Activated B cell treated with CpG ODN at 0.5 μM for 24 hours (primary cell): ENCODE measurements at regions of chr2 and their contacts with region 1.

Region 1: DNA sequence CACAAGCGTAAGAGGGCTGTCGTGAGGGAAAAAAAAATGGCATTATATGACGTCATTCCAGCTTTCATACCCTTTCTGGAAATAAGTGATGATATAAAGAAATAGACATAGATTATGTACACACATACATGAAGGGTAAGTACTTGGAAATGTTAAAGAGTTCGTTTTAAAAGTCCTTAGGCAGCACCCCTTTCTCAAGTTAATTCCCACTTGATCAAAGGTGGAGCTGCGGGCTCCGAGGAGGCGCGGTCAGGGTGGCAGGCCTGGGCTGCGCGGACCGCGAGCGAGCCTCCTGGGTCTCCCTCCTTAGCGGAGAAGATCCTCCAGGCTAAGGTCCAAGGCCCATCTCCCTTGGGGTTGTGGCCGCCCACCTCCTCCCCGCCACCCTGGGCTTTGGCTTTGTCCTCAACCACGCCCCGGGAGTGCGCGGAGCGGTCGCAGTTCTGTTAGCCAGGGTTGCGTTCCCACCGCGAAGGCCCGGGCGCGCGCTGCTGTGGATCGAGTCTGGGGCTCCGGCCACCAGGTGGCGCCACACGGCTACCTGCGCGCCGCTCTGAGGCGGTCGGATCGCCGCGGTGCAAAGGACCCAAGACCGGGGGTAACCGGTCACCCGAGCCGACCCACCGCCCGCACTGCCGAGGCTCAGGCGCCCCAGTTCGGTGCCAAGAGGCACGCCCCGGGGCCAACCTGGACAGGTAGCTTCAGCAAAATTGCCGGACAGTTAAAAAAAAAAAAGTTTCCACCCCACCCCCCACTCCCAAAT is 66.8 kb downstream of the HNRNPLL start:
- DNase-seq: peak; percentile 84
- ATAC-seq: peak; percentile 47
- H3K4me3 Mint-ChIP-seq: peak overlapping the region; percentile 75
- H3K27ac Mint-ChIP-seq: no peak overlapping the region
- H3K4me1 Mint-ChIP-seq: peaks cover 39% of the 10 kb centered on the region
- H3K27me3 Mint-ChIP-seq: peaks cover 11% of the 10 kb centered on the region
- CTCF ChIP-seq: peak; percentile 92

Region 2: DNA sequence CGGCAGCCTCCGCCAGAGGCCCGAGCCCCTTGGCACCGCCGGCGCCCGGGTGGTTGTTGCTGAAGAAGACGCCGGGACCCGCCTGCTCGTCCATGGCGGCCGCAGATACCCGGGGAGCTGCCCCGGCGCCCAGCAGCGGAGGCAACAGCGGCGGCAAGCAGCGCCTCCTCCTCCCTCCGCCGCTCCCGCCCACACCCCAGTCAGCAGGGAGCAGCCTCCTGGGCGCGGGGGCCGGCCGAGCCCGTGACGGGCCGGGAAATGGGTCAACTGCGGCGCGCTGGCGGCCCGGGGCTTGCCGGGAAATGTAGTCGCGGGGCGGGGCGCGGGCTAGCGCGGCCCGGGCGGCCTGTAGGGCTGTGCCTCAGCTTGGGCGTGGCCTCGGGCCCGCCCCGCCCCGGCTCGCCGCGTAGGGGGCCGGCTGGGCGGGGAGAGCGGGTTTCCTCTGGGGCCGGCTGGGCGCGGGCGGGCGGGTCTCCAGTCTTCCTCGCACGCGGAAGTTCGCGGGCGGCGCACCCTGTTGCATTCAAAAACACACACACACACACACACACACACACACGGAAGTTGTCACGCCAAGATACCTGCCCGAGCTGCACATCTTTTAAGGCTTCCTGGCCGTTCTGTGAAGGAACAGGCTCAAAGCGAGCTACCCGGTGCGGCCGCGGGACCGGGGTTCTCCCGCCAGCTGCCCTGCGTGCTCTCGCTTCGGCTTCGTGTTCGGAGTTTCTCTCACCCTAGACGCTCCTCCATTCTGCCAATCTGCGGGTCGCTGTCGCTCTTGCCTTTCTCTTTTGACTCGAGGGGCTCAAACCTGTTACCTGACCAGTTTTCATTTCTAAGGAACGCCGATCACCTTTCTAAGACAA is 1569.3 kb before region 1 on chr2 and contains the start of gene STRN:
- CTCF ChIA-PET with region 1: no interaction called
- POLR2A ChIA-PET with region 1: interaction called, 4 read pairs
- intact Hi-C with region 1: loop called (anchors 1 kb)
- DNase-seq: peak; percentile 100
- ATAC-seq: peak; percentile 91
- H3K4me3 Mint-ChIP-seq: peak within 1 kb of the TSS; percentile 97
- H3K27ac Mint-ChIP-seq: peak within 1 kb of the TSS; percentile 99
- H3K4me1 Mint-ChIP-seq: peaks cover 45% of the 10 kb centered on the region
- H3K27me3 Mint-ChIP-seq: no peaks in the 10 kb centered on the region
- CTCF ChIP-seq: no peak
- total RNA-seq, gene STRN: 24.7 and 24.9 TPM in 2 replicates

Region 3: GRCh38 chr2:38572167-38572566 is 36.2 kb after region 1 on chr2:
- CTCF ChIA-PET with region 1: no interaction called
- POLR2A ChIA-PET with region 1: no interaction called
- intact Hi-C with region 1: loop called (anchors 5 kb)
- DNase-seq: no peak
- ATAC-seq: no peak
- H3K4me3 Mint-ChIP-seq: no peak overlapping the region
- H3K27ac Mint-ChIP-seq: no peak overlapping the region
- H3K4me1 Mint-ChIP-seq: no peaks in the 10 kb centered on the region
- H3K27me3 Mint-ChIP-seq: peaks cover 2% of the 10 kb centered on the region
- CTCF ChIP-seq: no peak

Region 4: GRCh38 chr2:38590053-38590452 is 54.1 kb after region 1 on chr2:
- CTCF ChIA-PET with region 1: no interaction called
- POLR2A ChIA-PET with region 1: no interaction called
- intact Hi-C with region 1: loop called (anchors 2 kb)
- DNase-seq: no peak
- ATAC-seq: no peak
- H3K4me3 Mint-ChIP-seq: no peak overlapping the region
- H3K27ac Mint-ChIP-seq: no peak overlapping the region
- H3K4me1 Mint-ChIP-seq: no peaks in the 10 kb centered on the region
- H3K27me3 Mint-ChIP-seq: peaks cover 27% of the 10 kb centered on the region
- CTCF ChIP-seq: no peak

Region 5: GRCh38 chr2:38665854-38666555 is 130.1 kb after region 1 on chr2 and contains the start of gene GALM:
- CTCF ChIA-PET with region 1: no interaction called
- POLR2A ChIA-PET with region 1: no interaction called
- intact Hi-C with region 1: loop called (anchors 5 kb)
- DNase-seq: peak; percentile 23
- ATAC-seq: peak; percentile 78
- H3K4me3 Mint-ChIP-seq: peak within 1 kb of the TSS; percentile 80
- H3K27ac Mint-ChIP-seq: peak within 1 kb of the TSS; percentile 59
- H3K4me1 Mint-ChIP-seq: peaks cover 26% of the 10 kb centered on the region
- H3K27me3 Mint-ChIP-seq: no peaks in the 10 kb centered on the region
- CTCF ChIP-seq: no peak
- total RNA-seq, gene GALM: 3.5 and 5.4 TPM in 2 replicates